ENCODE measurements at regions of chr11 and their contacts with region 1.

Region 1: DNA sequence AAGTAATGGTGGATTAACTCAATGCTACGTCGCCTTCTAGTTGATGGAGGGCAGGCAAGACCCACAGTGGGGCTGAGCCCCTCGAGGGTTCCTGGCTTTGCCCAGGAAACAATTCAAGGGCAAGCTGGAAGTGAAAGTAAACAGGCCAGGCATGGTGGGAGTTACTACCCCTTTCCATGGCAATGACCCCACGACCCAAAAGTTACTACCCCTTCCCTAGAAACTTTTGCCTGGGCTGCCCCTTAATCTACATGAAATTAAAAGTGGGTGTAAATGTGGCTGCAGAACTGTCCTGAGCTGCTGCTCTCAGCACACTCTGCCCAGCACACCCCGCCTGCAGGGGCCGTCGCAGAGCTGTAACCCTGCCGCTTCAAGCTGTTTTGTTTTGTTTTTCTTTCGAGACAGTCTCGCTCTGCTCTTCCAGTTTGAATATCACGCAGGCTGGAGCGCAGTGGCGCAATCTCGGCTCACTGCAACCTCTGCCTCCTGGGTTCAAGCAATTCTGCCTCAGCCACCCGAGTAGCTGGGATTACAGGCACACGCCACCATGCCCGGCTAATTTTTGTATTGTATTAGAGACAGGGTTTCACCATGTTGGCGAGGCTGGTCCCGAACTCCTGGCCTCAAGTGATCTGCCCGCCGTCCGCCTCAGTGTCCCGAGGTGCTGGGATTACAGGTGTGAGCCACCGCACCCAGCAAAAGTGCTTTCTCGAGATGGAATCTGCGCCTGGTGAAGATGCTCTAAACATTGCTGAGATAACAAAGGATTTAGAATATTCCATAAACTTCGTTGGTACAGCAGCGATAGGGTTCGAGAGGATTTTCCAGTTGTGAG is 5.9 kb upstream of the RNH1 start:
- DNase-seq: no peak
- H3K4me3 ChIP-seq: no peak overlapping the region
- H3K27ac ChIP-seq: no peak overlapping the region
- H3K4me1 ChIP-seq: peaks cover under 1 to 13% (median 9%) of the 10 kb centered on the region in 4 donors
- H3K27me3 ChIP-seq: no peaks in the 10 kb centered on the region
- CTCF ChIP-seq: no peak
- EP300 ChIP-seq: no peak
- POLR2A ChIP-seq: no peak

Region 2: GRCh38 chr11:406978-407739 is 105.8 kb before region 1 on chr11:
- intact Hi-C with region 1: loop called (anchors 5 kb)
- DNase-seq: peak; percentile 95
- H3K4me3 ChIP-seq: peak overlapping the region; percentile 62 to 86 (median 71)
- H3K27ac ChIP-seq: peak overlapping the region; percentile 69 to 79 (median 74)
- H3K4me1 ChIP-seq: peaks cover 16 to 26% (median 24%) of the 10 kb centered on the region in 4 donors
- H3K27me3 ChIP-seq: peaks cover 0 to 17% (median 3%) of the 10 kb centered on the region in 4 donors
- CTCF ChIP-seq: no peak
- EP300 ChIP-seq: no peak
- POLR2A ChIP-seq: no peak

Measured in esophagus muscularis mucosa (tissue), 4 donors.